Activated T-helper 2 cell treated with anti-CD3 and anti-CD28 coated beads, Interferon-gamma antibody, Interleukin-2, Interleukin-4, amounts not matched to agents 10 μg/mL and 5 μg/mL and 100 μg/mL, durations not matched to agents 14 hours and 24 hours and 36 hours (primary cell): ENCODE measurements at regions of chr6 and their contacts with region 1.

Region 1: DNA sequence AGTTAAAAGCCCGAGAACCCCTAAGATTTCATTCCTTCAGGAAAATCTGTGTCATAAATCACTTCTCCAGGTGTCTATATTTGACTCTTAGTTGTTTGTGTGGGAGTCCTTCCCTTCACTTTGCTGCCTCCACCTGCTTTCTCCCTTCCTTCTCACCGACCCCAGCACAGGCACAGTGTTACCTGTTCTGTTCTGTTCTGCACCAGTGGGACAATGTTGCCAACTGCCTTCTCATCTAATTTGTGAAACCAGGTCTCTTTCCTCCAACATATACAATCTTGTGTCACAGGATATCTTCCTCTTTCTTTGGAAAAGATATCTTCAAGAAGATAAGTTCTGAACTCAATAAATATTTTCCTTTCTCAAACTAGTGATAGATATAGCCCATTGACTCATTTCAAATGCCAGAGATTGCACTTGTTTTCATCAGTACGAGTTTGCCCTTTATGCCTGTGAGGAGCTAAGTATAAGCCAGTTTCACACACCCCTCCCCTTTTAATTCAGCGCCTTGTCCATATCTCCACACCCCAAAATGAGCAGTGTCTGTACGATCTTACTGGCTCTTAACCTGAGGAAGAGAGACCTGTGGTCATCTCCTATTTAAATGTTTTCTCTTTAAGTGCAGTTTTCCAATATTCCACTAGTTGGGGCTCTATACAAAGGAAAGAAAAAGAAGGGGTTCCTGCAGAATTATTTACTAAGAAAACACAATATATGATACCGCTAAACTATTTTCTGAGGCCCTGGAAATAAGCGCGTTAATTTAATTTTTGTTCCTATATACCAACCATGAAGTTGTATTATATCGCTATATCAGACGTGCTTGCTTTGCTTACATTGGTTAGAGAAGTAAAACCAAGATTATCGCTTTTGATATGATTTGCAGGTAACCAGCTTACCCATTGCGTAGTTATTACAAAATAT is 81.6 kb upstream of the PREP start:
- DNase-seq: no peak
- H3K4me3 Mint-ChIP-seq: peak overlapping the region; percentile 14
- H3K27ac Mint-ChIP-seq: peak overlapping the region; percentile 58
- H3K4me1 Mint-ChIP-seq: peaks cover 58% of the 10 kb centered on the region
- H3K27me3 Mint-ChIP-seq: no peaks in the 10 kb centered on the region

Region 2: GRCh38 chr6:105431226-105431625 is 53.3 kb before region 1 on chr6:
- intact Hi-C with region 1: loop called (anchors 5 kb)
- DNase-seq: no peak
- H3K4me3 Mint-ChIP-seq: no peak overlapping the region
- H3K27ac Mint-ChIP-seq: no peak overlapping the region
- H3K4me1 Mint-ChIP-seq: peaks cover 6% of the 10 kb centered on the region
- H3K27me3 Mint-ChIP-seq: peaks cover 26% of the 10 kb centered on the region

Region 3: GRCh38 chr6:105560611-105561066 is 76.1 kb after region 1 on chr6:
- intact Hi-C with region 1: no loop called
- DNase-seq: no peak
- H3K4me3 Mint-ChIP-seq: no peak overlapping the region
- H3K27ac Mint-ChIP-seq: peak overlapping the region; percentile 33
- H3K4me1 Mint-ChIP-seq: peaks cover 20% of the 10 kb centered on the region
- H3K27me3 Mint-ChIP-seq: peaks cover 6% of the 10 kb centered on the region

Region 4: GRCh38 chr6:105620878-105621277 is 136.4 kb after region 1 on chr6:
- intact Hi-C with region 1: loop called (anchors 1 kb)
- DNase-seq: no peak
- H3K4me3 Mint-ChIP-seq: no peak overlapping the region
- H3K27ac Mint-ChIP-seq: peak overlapping the region; percentile 85
- H3K4me1 Mint-ChIP-seq: peaks cover 40% of the 10 kb centered on the region
- H3K27me3 Mint-ChIP-seq: peaks cover 2% of the 10 kb centered on the region

Region 5: GRCh38 chr6:105793130-105793529 is 308.6 kb after region 1 on chr6:
- intact Hi-C with region 1: loop called (anchors 5 kb)
- DNase-seq: no peak
- H3K4me3 Mint-ChIP-seq: no peak overlapping the region
- H3K27ac Mint-ChIP-seq: peak overlapping the region; percentile 34
- H3K4me1 Mint-ChIP-seq: peaks cover 86% of the 10 kb centered on the region
- H3K27me3 Mint-ChIP-seq: no peaks in the 10 kb centered on the region

Region 6: GRCh38 chr6:105880030-105880492 is 395.6 kb after region 1 on chr6:
- intact Hi-C with region 1: loop called (anchors 10 kb)
- DNase-seq: no peak
- H3K4me3 Mint-ChIP-seq: peak overlapping the region; percentile 43
- H3K27ac Mint-ChIP-seq: peak overlapping the region; percentile 21
- H3K4me1 Mint-ChIP-seq: peaks cover 58% of the 10 kb centered on the region
- H3K27me3 Mint-ChIP-seq: peaks cover 4% of the 10 kb centered on the region

Region 7: GRCh38 chr6:105981002-105981887 is 496.7 kb after region 1 on chr6:
- intact Hi-C with region 1: loop called (anchors 5 kb)
- DNase-seq: peak; percentile 36
- H3K4me3 Mint-ChIP-seq: peak overlapping the region; percentile 74
- H3K27ac Mint-ChIP-seq: peak overlapping the region; percentile 85
- H3K4me1 Mint-ChIP-seq: peaks cover 56% of the 10 kb centered on the region
- H3K27me3 Mint-ChIP-seq: peaks cover 3% of the 10 kb centered on the region

Region 8: GRCh38 chr6:106223300-106223930 is 738.9 kb after region 1 on chr6:
- intact Hi-C with region 1: loop called (anchors 1 kb)
- DNase-seq: peak; percentile 48
- H3K4me3 Mint-ChIP-seq: no peak overlapping the region
- H3K27ac Mint-ChIP-seq: no peak overlapping the region
- H3K4me1 Mint-ChIP-seq: peaks cover 44% of the 10 kb centered on the region
- H3K27me3 Mint-ChIP-seq: no peaks in the 10 kb centered on the region